ENCODE measurements at regions of chr6 and their contacts with region 1.

Region 1: DNA sequence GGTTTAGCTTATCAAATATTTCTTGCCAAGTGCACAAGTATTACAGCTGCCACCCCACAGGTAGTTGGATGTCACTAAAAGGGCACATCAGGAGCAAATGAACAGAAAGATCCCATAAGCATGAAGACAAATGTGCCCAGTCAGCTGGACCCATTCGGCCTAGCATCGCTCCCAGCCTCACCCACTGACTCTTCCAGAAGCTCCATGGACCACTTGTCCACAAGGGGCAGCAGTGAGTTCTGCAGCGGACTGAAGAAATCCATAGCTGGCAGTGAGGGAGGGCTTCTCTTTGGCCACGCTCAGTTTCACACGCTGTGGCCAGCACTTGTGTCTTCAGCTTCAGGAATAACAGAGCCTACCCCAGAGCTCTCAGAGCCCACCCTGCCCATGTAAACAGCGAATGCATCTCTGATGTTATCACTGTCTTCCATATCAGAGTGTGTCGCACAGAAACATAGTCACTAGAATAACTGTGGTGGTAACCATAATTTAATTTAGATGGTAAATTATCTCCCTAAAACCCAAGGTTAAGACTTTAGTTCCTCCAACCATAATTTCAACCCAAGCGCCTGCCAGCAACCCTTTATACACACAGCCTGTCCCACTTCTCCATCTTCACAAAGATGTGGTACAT is 15.8 kb downstream of the CGA start:
- DNase-seq: peak; percentile 63
- ATAC-seq: peak; percentile 94
- H3K4me3 ChIP-seq: no peak overlapping the region
- H3K27ac ChIP-seq: no peak overlapping the region
- H3K4me1 ChIP-seq: no peaks in the 10 kb centered on the region
- H3K27me3 ChIP-seq: peaks cover 6% of the 10 kb centered on the region
- CTCF ChIP-seq: peak; percentile 64
- POLR2A ChIP-seq: no peak
- RAD21 ChIP-seq: peak; percentile 52

Region 2: GRCh38 chr6:87102151-87102621 is 23.1 kb after region 1 on chr6:
- CTCF ChIA-PET with region 1: interaction called, 10 read pairs
- POLR2A ChIA-PET with region 1: no interaction called
- dilution Hi-C with region 1: no loop called
- in situ Hi-C with region 1: no loop called
- intact Hi-C with region 1: no loop called
- DNase-seq: no peak
- ATAC-seq: no peak
- H3K4me3 ChIP-seq: no peak overlapping the region
- H3K27ac ChIP-seq: no peak overlapping the region
- H3K4me1 ChIP-seq: peaks cover 4% of the 10 kb centered on the region
- H3K27me3 ChIP-seq: no peaks in the 10 kb centered on the region
- CTCF ChIP-seq: no peak
- POLR2A ChIP-seq: no peak
- RAD21 ChIP-seq: no peak

Measured in IMR-90 (cell line).